ENCODE measurements at regions of chr1 and their contacts with region 1.

Region 1: GRCh38 chr1:110106013-110106941 is 6.0 kb upstream of the UBL4B start:
- DNase-seq: peak; percentile 63
- H3K4me3 Mint-ChIP-seq: no peak overlapping the region
- H3K27ac Mint-ChIP-seq: no peak overlapping the region
- H3K4me1 Mint-ChIP-seq: no peaks in the 10 kb centered on the region
- H3K27me3 Mint-ChIP-seq: peaks cover 35% of the 10 kb centered on the region
- CTCF ChIP-seq: peak; percentile 93

Region 2: GRCh38 chr1:109910963-109911798 is 195.1 kb before region 1 on chr1:
- CTCF ChIA-PET with region 1: no interaction called
- POLR2A ChIA-PET with region 1: no interaction called
- intact Hi-C with region 1: no loop called
- DNase-seq: no peak
- H3K4me3 Mint-ChIP-seq: peak overlapping the region; percentile 73
- H3K27ac Mint-ChIP-seq: peak overlapping the region; percentile 69
- H3K4me1 Mint-ChIP-seq: peaks cover 25% of the 10 kb centered on the region
- H3K27me3 Mint-ChIP-seq: no peaks in the 10 kb centered on the region
- CTCF ChIP-seq: no peak

Region 3: GRCh38 chr1:110034451-110035235 is 71.6 kb before region 1 on chr1 and contains the start of gene STRIP1:
- CTCF ChIA-PET with region 1: interaction called, 59 read pairs
- POLR2A ChIA-PET with region 1: interaction called, 5 read pairs
- intact Hi-C with region 1: loop called (anchors 1 kb)
- DNase-seq: peak; percentile 96
- H3K4me3 Mint-ChIP-seq: peak within 1 kb of the TSS; percentile 97
- H3K27ac Mint-ChIP-seq: peak within 1 kb of the TSS; percentile 94
- H3K4me1 Mint-ChIP-seq: peaks cover 18% of the 10 kb centered on the region
- H3K27me3 Mint-ChIP-seq: no peaks in the 10 kb centered on the region
- CTCF ChIP-seq: no peak
- total RNA-seq, gene STRIP1: 35.6 and 40.6 TPM in 2 replicates

Region 4: DNA sequence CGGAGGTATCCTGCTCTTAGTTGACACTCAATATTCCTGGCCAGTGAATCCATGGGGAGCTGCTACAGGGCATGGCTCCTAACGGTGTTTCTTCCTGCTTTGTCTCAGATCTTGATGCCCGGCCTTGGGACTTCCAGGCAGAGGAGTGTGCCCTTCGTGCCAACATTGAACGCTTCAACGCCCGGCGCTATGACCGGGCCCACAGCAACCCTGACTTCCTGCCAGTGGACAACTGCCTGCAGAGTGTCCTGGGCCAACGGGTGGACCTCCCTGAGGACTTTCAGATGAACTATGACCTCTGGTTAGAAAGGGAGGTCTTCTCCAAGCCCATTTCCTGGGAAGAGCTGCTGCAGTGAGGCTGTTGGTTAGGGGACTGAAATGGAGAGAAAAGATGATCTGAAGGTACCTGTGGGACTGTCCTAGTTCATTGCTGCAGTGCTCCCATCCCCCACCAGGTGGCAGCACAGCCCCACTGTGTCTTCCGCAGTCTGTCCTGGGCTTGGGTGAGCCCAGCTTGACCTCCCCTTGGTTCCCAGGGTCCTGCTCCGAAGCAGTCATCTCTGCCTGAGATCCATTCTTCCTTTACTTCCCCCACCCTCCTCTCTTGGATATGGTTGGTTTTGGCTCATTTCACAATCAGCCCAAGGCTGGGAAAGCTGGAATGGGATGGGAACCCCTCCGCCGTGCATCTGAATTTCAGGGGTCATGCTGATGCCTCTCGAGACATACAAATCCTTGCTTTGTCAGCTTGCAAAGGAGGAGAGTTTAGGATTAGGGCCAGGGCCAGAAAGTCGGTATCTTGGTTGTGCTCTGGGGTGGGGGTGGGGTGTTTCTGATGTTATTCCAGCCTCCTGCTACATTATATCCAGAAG is 52.5 kb before region 1 on chr1:
- CTCF ChIA-PET with region 1: interaction called, 183 read pairs
- POLR2A ChIA-PET with region 1: no interaction called
- intact Hi-C with region 1: loop called (anchors 1 kb)
- DNase-seq: peak; percentile 57
- H3K4me3 Mint-ChIP-seq: no peak overlapping the region
- H3K27ac Mint-ChIP-seq: peak overlapping the region; percentile 12
- H3K4me1 Mint-ChIP-seq: peaks cover 2% of the 10 kb centered on the region
- H3K27me3 Mint-ChIP-seq: no peaks in the 10 kb centered on the region
- CTCF ChIP-seq: peak; percentile 87

Region 5: GRCh38 chr1:110076789-110077500 is 29.3 kb before region 1 on chr1:
- CTCF ChIA-PET with region 1: interaction called, 23 read pairs
- POLR2A ChIA-PET with region 1: no interaction called
- intact Hi-C with region 1: no loop called
- DNase-seq: no peak
- H3K4me3 Mint-ChIP-seq: no peak overlapping the region
- H3K27ac Mint-ChIP-seq: no peak overlapping the region
- H3K4me1 Mint-ChIP-seq: no peaks in the 10 kb centered on the region
- H3K27me3 Mint-ChIP-seq: no peaks in the 10 kb centered on the region
- CTCF ChIP-seq: no peak

Region 6: GRCh38 chr1:110118636-110119615 is 12.6 kb after region 1 on chr1:
- CTCF ChIA-PET with region 1: interaction called, 35 read pairs
- POLR2A ChIA-PET with region 1: no interaction called
- intact Hi-C with region 1: no loop called
- DNase-seq: peak; percentile 16
- H3K4me3 Mint-ChIP-seq: no peak overlapping the region
- H3K27ac Mint-ChIP-seq: no peak overlapping the region
- H3K4me1 Mint-ChIP-seq: no peaks in the 10 kb centered on the region
- H3K27me3 Mint-ChIP-seq: peaks cover 24% of the 10 kb centered on the region
- CTCF ChIP-seq: no peak

Region 7: GRCh38 chr1:110136911-110137310 is 30.6 kb after region 1 on chr1:
- CTCF ChIA-PET with region 1: interaction called, 13 read pairs
- POLR2A ChIA-PET with region 1: no interaction called
- intact Hi-C with region 1: no loop called
- DNase-seq: no peak
- H3K4me3 Mint-ChIP-seq: no peak overlapping the region
- H3K27ac Mint-ChIP-seq: no peak overlapping the region
- H3K4me1 Mint-ChIP-seq: no peaks in the 10 kb centered on the region
- H3K27me3 Mint-ChIP-seq: peaks cover 74% of the 10 kb centered on the region
- CTCF ChIP-seq: no peak

Region 8: DNA sequence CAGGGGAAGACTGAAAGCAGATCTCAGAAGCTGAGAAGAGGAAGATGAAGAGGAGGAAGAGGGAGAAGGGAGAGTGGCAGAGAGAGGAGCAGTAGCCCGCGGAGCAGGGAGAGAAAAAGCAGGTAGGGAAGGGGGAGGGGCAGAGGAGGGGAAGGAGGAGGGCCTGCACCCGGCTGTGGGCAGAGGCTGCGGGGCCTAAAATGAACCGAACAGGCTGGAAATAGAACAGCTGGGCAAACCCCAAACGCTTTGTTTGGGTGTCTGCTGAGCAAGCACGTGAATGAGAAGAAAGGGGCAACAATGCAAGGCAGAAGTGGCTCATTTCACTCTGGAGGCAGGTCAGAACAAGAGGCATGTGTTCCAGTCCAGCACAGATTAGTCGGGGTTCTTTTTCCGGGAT is 137.3 kb after region 1 on chr1:
- CTCF ChIA-PET with region 1: no interaction called
- POLR2A ChIA-PET with region 1: no interaction called
- intact Hi-C with region 1: no loop called
- DNase-seq: no peak
- H3K4me3 Mint-ChIP-seq: no peak overlapping the region
- H3K27ac Mint-ChIP-seq: peak overlapping the region; percentile 28
- H3K4me1 Mint-ChIP-seq: no peaks in the 10 kb centered on the region
- H3K27me3 Mint-ChIP-seq: no peaks in the 10 kb centered on the region
- CTCF ChIP-seq: no peak

Measured in MCF 10A (cell line).